AG04450 (cell line): ENCODE measurements at regions of chr20 and their contacts with region 1.

Region 1: DNA sequence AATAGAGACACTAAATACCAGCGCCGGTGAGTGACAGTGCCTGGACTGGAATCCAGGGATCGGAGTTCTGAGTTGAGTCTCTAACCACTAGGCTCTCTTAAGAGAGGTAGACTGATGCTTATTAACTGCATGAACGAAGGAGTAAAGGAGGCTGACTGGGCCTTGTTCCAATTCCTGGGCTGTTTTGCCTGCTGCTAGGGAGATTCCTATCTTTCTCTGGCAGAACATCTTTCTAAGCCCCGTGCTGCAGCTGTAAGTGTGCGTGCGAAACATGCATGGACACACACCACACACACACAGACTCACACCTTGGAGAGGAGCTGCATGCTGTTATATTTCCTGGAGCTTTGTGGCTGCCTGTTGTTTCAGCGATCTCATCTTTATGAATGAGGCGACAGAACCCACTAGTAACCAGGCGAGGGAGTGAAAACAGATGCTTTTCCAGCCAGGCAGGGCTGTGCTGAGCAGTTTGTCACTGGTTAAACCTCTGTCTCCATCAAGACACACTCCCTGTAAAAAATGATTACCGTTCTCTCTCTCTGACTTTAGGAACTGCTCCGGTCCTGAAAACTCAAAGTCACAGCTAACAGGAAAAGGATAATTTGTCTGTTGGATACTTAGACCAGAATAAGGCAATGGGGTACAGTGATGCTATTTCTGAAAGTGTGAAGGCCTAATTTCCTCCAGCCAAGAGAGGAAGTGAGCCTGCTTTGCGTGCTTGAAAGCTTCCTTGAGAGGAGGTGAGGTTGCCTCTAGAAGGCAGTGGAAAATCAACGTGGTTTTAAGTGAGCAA is 157.4 kb upstream of the ZNF217 start:
- DNase-seq: peak; percentile 65
- H3K4me3 ChIP-seq: no peak overlapping the region
- H3K27ac ChIP-seq: peak overlapping the region; percentile 80
- H3K27me3 ChIP-seq: no peaks in the 10 kb centered on the region
- CTCF ChIP-seq: 0 out of 2 replicates have a peak, but pooled peaks have one; percentile 2

Region 2: DNA sequence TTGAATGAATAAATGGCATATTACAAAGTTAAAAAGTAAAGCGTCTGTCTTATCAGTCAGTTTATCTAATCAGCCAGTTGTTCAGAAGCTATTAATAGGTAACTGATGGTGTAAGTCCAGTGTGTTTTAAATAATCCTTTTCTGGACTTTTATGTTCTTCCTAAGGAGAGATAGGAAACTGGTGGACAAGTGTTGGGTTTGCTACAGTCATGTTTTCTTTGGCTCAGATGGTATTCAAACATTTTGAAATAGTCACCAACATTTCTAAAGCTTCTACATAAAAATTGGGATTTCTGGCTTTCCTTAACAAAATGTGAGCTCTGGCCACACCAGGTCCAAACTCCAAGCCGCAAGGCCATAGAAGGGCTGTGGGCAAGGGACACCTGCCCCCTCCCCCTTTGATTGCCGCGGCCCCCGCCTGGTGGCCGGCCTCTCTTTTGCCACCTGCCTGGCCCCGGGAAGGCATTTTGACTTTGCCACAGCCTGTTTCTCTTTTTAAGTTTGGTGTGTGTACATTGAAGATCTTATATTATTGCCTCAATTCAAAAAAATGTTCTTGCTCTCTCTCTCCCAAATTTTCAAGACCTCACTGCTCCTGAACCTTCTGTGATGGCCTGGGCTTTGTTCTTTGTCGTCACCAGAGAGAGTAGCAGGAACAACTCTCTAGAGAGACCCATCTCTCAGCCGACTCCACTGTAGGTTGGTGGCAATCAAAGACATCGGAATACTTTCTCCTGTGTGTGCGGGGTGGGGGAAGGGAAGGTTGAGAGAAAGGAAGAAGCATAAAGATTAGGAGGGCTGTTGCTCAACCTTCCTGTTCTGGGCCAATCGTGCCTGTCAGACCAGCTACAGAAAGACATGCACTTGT is 73.3 kb before region 1 on chr20:
- CTCF ChIA-PET with region 1: no interaction called
- POLR2A ChIA-PET with region 1: no interaction called
- DNase-seq: no peak
- H3K4me3 ChIP-seq: no peak overlapping the region
- H3K27ac ChIP-seq: peak overlapping the region; percentile 24
- H3K27me3 ChIP-seq: no peaks in the 10 kb centered on the region
- CTCF ChIP-seq: no peak

Region 3: DNA sequence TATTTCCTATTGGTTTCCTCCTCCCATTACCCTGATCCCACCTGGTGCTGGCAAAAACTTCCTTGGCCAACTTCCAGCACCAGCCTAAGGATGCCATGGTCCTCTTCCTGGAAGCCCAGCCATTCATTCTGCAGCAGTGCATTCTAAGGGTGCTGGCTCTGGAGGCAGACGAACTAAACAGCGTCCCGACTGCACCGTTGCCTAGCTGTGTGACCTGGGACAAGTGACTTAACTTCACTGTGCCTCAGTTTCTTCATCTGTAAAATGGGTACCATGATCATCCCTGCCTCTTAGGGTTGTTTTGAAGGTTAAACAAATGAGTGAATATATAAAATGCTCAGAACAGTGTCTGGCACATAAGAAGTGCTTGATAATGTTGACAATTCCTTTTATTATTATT is 36.5 kb before region 1 on chr20:
- CTCF ChIA-PET with region 1: interaction called, 12 read pairs
- POLR2A ChIA-PET with region 1: no interaction called
- DNase-seq: no peak
- H3K4me3 ChIP-seq: no peak overlapping the region
- H3K27ac ChIP-seq: no peak overlapping the region
- H3K27me3 ChIP-seq: no peaks in the 10 kb centered on the region
- CTCF ChIP-seq: no peak

Region 4: DNA sequence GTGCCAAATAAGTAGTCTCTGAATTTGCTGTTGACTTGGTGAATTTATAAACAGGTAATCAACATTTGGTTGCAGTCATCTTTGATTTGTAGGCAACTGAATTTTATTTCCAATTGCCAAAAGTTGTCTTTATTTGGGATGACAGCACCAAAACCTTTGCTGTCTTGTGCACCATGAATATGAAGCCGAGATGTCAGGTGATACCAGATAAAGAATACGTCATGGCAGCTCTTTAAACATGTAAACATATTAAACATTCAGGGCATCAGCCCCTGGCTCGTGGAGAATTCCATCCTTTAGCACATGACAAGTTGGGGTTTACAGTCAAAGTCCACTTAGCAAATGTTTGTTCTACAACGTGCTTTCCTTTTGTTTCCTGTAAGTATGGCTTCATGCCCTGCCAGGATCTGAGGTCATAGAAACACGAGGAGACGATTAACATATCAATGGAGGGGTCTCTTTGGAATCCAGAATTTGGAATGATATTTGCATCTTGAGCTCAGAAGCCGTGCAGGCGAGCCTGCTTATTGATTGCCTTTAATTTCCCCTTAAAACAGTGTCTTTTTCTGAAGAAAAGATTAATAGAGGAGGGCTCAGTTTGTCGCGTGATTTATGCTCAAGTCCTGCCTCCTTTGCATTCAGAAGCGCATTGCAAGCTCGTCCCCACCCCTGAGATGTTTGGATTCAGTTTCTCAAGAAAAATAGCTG is 12.8 kb after region 1 on chr20:
- CTCF ChIA-PET with region 1: no interaction called
- POLR2A ChIA-PET with region 1: no interaction called
- DNase-seq: no peak
- H3K4me3 ChIP-seq: no peak overlapping the region
- H3K27ac ChIP-seq: peak overlapping the region; percentile 77
- H3K27me3 ChIP-seq: no peaks in the 10 kb centered on the region
- CTCF ChIP-seq: no peak

Region 5: DNA sequence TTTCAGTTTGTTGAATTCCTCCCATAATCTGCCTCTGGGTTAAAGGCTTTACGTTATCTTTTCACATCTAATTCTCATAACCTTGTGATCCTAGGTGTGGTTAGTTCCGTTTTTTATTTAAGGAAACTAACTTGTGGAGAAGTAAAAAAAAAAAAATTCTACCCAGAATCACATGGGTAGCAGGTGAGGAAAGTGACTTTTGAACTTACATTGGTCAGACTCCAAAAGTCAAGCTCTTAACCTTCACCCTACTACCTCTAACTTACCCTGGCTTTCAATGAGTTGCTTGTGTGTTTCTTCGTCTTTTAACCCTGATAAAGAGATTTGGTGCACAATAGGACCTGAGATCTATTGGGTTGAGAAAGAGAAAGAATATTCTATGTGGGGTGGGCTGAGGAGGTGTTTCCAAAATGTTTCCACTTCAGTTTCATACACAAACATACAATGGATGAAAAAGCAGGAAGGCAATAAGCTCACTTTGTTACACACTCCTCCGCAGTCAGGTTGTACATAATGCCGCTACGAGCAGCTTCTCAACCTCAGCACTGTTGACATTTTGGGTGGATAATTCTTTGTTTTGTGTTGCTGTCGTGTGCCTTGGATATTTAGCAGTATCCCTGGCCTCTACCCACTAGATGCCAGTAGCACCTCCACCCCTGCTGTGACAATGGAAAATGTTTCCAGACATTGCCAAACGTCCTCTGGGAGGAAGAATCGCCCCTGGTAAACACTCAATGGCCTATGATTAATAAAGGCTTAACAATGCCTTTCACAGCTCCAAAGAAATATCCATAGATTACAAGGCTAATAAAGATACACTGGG is 35.6 kb after region 1 on chr20:
- CTCF ChIA-PET with region 1: no interaction called
- POLR2A ChIA-PET with region 1: no interaction called
- DNase-seq: no peak
- H3K4me3 ChIP-seq: no peak overlapping the region
- H3K27ac ChIP-seq: no peak overlapping the region
- H3K27me3 ChIP-seq: no peaks in the 10 kb centered on the region
- CTCF ChIP-seq: no peak